Activated naive CD4-positive, alpha-beta T cell treated with anti-CD3 and anti-CD28 coated beads, Interleukin-2, amount 10 ng/mL, durations not matched to agents 7 days and 5 days (primary cell): ENCODE measurements at regions of chr11 and their contacts with region 1.

Region 1: GRCh38 chr11:10322830-10323792 is 18.2 kb downstream of the ADM start:
- DNase-seq: peak; percentile 56
- H3K4me3 Mint-ChIP-seq: no peak overlapping the region
- H3K27ac Mint-ChIP-seq: no peak overlapping the region
- H3K4me1 Mint-ChIP-seq: peaks cover 4% of the 10 kb centered on the region
- H3K27me3 Mint-ChIP-seq: peaks cover 22% of the 10 kb centered on the region

Region 2: GRCh38 chr11:10208131-10208575 is 115.0 kb before region 1 on chr11:
- CTCF ChIA-PET with region 1: interaction called, 20 read pairs
- DNase-seq: no peak
- H3K4me3 Mint-ChIP-seq: no peak overlapping the region
- H3K27ac Mint-ChIP-seq: no peak overlapping the region
- H3K4me1 Mint-ChIP-seq: no peaks in the 10 kb centered on the region
- H3K27me3 Mint-ChIP-seq: peaks cover 8% of the 10 kb centered on the region